Activated CD4-positive, alpha-beta memory T cell treated with anti-CD3 and anti-CD28 coated beads, Interleukin-2, amount 10 ng/mL, durations not matched to agents 7 days and 5 days (primary cell): ENCODE measurements at regions of chr1 and their contacts with region 1.

Region 1: GRCh38 chr1:214328770-214329469 is 48.0 kb downstream of the SMYD2 start:
- DNase-seq: peak; percentile 84
- H3K4me3 Mint-ChIP-seq: no peak overlapping the region
- H3K27ac Mint-ChIP-seq: no peak overlapping the region
- H3K4me1 Mint-ChIP-seq: peaks cover 16% of the 10 kb centered on the region
- H3K27me3 Mint-ChIP-seq: no peaks in the 10 kb centered on the region

Region 2: GRCh38 chr1:213724640-213725536 is 604.0 kb before region 1 on chr1:
- CTCF ChIA-PET with region 1: no interaction called
- POLR2A ChIA-PET with region 1: no interaction called
- DNase-seq: no peak
- H3K4me3 Mint-ChIP-seq: no peak overlapping the region
- H3K27ac Mint-ChIP-seq: no peak overlapping the region
- H3K4me1 Mint-ChIP-seq: no peaks in the 10 kb centered on the region
- H3K27me3 Mint-ChIP-seq: no peaks in the 10 kb centered on the region

Region 3: DNA sequence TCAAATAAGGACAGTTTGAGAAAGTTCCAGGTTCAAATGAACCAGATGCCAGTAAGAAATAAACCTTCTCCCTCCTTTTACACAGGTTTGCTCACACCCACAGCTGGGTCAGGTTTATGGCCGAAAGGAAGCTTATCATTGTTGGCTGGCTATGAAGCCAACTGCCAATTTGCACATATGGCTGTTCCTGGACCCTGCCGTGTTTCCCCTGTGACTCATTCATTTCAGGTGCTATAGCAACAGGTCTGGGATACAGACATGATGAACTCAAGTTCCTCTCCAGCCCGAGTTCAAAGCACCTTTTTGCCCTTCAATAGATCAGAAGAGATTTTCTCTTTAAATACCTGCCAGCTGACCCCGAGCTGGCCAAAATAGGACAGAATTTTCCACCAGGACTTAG is 182.4 kb before region 1 on chr1:
- CTCF ChIA-PET with region 1: no interaction called
- POLR2A ChIA-PET with region 1: no interaction called
- DNase-seq: no peak
- H3K4me3 Mint-ChIP-seq: no peak overlapping the region
- H3K27ac Mint-ChIP-seq: no peak overlapping the region
- H3K4me1 Mint-ChIP-seq: no peaks in the 10 kb centered on the region
- H3K27me3 Mint-ChIP-seq: no peaks in the 10 kb centered on the region

Region 4: DNA sequence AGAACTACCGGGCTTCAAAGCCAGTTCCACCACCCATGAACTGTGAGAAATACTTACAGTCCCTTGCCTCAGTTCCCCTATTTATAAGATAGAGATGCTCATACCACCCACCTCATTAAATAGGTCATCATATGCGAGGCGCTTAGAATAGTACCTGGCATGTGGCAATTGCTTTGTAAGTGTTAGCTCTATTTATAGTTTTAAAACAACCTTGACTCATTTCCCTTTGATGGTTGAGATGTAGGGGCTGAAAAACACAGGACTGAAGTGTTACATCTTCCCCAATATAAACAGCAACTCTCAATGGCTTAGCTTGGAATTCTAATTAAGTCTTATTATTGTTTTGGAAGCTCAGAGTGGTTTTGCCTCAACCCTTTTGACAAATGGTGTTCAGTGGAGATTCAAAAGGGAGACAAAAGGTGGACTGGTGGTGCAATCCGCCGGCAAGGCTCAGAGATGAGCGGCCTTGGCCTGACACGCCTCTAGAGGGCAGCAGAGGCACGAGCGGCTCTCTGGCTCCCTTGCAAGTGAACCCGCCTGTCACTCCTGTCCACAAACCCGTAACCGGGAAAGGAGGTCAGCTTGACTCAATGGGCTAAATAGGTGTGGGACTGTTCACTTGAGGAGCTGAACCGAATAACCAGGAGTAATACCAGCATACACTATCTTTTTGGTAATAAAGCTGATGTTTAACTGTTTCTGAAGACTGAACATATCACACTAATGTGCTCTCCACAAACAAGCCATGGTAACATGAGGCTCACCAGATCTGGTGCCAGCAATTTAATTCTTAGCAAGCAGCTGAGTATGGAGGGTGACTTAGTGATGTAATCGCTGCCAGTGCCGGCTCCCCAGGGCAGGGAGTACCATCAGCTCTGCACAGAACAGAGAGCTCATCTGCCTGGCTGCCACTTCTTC is 67.5 kb before region 1 on chr1:
- CTCF ChIA-PET with region 1: interaction called, 390 read pairs
- POLR2A ChIA-PET with region 1: interaction called, 18 read pairs
- DNase-seq: peak; percentile 85
- H3K4me3 Mint-ChIP-seq: no peak overlapping the region
- H3K27ac Mint-ChIP-seq: no peak overlapping the region
- H3K4me1 Mint-ChIP-seq: peaks cover 33% of the 10 kb centered on the region
- H3K27me3 Mint-ChIP-seq: peaks cover 67% of the 10 kb centered on the region

Region 5: GRCh38 chr1:214303141-214303930 is 25.6 kb before region 1 on chr1:
- CTCF ChIA-PET with region 1: interaction called, 35 read pairs
- POLR2A ChIA-PET with region 1: no interaction called
- DNase-seq: no peak
- H3K4me3 Mint-ChIP-seq: no peak overlapping the region
- H3K27ac Mint-ChIP-seq: no peak overlapping the region
- H3K4me1 Mint-ChIP-seq: peaks cover 8% of the 10 kb centered on the region
- H3K27me3 Mint-ChIP-seq: no peaks in the 10 kb centered on the region

Region 6: DNA sequence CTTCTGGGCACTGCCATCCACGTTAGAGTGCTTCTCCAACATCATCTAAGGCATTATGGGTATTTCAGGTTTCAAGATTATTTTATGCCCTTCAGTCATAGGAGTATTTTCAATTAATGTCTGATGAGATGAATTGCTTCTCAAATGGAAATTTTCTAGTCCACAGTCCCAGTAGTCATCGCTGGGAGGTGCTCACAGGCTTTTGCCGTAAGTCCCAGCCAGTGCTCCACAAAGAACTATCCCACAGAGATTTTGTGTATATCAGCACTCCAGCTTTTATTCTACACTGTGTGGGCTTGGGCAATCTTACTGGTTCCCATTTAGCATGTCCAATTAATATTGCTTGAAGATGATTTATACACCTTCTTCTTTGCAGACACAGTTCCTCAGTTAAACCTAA is 13.0 kb after region 1 on chr1:
- CTCF ChIA-PET with region 1: interaction called, 26 read pairs
- POLR2A ChIA-PET with region 1: no interaction called
- DNase-seq: no peak
- H3K4me3 Mint-ChIP-seq: no peak overlapping the region
- H3K27ac Mint-ChIP-seq: no peak overlapping the region
- H3K4me1 Mint-ChIP-seq: peaks cover 2% of the 10 kb centered on the region
- H3K27me3 Mint-ChIP-seq: no peaks in the 10 kb centered on the region

Region 7: GRCh38 chr1:214584805-214585766 is 256.2 kb after region 1 on chr1:
- CTCF ChIA-PET with region 1: interaction called, 118 read pairs
- POLR2A ChIA-PET with region 1: no interaction called
- DNase-seq: no peak
- H3K4me3 Mint-ChIP-seq: no peak overlapping the region
- H3K27ac Mint-ChIP-seq: no peak overlapping the region
- H3K4me1 Mint-ChIP-seq: no peaks in the 10 kb centered on the region
- H3K27me3 Mint-ChIP-seq: peaks cover 10% of the 10 kb centered on the region

Region 8: GRCh38 chr1:214637722-214638458 is 309.0 kb after region 1 on chr1:
- CTCF ChIA-PET with region 1: interaction called, 16 read pairs
- POLR2A ChIA-PET with region 1: no interaction called
- DNase-seq: peak; percentile 33
- H3K4me3 Mint-ChIP-seq: no peak overlapping the region
- H3K27ac Mint-ChIP-seq: peak overlapping the region; percentile 55
- H3K4me1 Mint-ChIP-seq: peaks cover 27% of the 10 kb centered on the region
- H3K27me3 Mint-ChIP-seq: no peaks in the 10 kb centered on the region

Region 9: DNA sequence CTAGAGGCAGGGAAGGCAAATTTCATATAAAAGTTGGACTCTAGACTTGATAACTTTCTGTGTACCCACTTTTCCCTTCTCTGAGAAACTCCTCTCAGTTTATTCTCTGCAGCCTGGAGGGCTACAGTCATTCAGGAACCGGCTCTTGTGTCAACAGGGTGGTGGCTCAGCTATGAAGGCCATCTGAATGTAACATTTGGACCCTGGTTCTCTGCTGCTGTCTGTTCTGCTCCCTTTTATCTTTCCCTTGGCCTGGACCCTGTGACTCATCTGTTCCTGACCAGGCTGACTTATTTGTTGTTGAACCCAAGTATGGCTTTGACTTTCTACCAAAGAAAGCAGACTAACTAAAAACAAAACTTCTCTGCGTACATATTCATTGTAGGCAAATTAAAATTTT is 349.5 kb after region 1 on chr1:
- CTCF ChIA-PET with region 1: no interaction called
- POLR2A ChIA-PET with region 1: no interaction called
- DNase-seq: no peak
- H3K4me3 Mint-ChIP-seq: no peak overlapping the region
- H3K27ac Mint-ChIP-seq: no peak overlapping the region
- H3K4me1 Mint-ChIP-seq: no peaks in the 10 kb centered on the region
- H3K27me3 Mint-ChIP-seq: peaks cover 2% of the 10 kb centered on the region

Region 10: GRCh38 chr1:214764537-214764936 is 435.6 kb after region 1 on chr1:
- CTCF ChIA-PET with region 1: no interaction called
- POLR2A ChIA-PET with region 1: no interaction called
- DNase-seq: no peak
- H3K4me3 Mint-ChIP-seq: no peak overlapping the region
- H3K27ac Mint-ChIP-seq: no peak overlapping the region
- H3K4me1 Mint-ChIP-seq: no peaks in the 10 kb centered on the region
- H3K27me3 Mint-ChIP-seq: no peaks in the 10 kb centered on the region